Naive thymus-derived CD8-positive, alpha-beta T cell (primary cell): ENCODE measurements at regions of chr21 and their contacts with region 1.

Region 1: GRCh38 chr21:37267269-37268184 is at the start of gene VPS26C:
- DNase-seq: peak; percentile 91 to 99 (median 98)
- ATAC-seq: peak; percentile 86
- H3K4me3 Mint-ChIP-seq: peak within 1 kb of the TSS; percentile 91 to 99 (median 93)
- H3K27ac Mint-ChIP-seq: peak within 1 kb of the TSS; percentile 94 to 99 (median 98)
- H3K4me1 Mint-ChIP-seq: peaks cover 14 to 53% (median 33%) of the 10 kb centered on the region in 4 donors
- H3K27me3 Mint-ChIP-seq: no peaks in the 10 kb centered on the region
- polyA plus RNA-seq, gene VPS26C: 60.1 to 72.7 (median 62.9) TPM

Region 2: GRCh38 chr21:37130971-37131370 is 136.6 kb before region 1 on chr21:
- POLR2A ChIA-PET with region 1: no interaction called
- DNase-seq: no peak
- ATAC-seq: no peak
- H3K4me3 Mint-ChIP-seq: no peak overlapping the region
- H3K27ac Mint-ChIP-seq: no peak overlapping the region
- H3K4me1 Mint-ChIP-seq: peaks cover 5 to 12% (median 8%) of the 10 kb centered on the region in 4 donors
- H3K27me3 Mint-ChIP-seq: no peaks in the 10 kb centered on the region

Region 3: GRCh38 chr21:37220981-37221664 is 46.4 kb before region 1 on chr21:
- POLR2A ChIA-PET with region 1: interaction called, 16 read pairs
- DNase-seq: peak; percentile 86 to 95 (median 90)
- ATAC-seq: peak; percentile 78 to 81
- H3K4me3 Mint-ChIP-seq: peak overlapping the region; percentile 80 to 96 (median 89)
- H3K27ac Mint-ChIP-seq: peak overlapping the region; percentile 81 to 98 (median 95)
- H3K4me1 Mint-ChIP-seq: peaks cover 21 to 61% (median 44%) of the 10 kb centered on the region in 4 donors
- H3K27me3 Mint-ChIP-seq: no peaks in the 10 kb centered on the region

Region 4: GRCh38 chr21:37251294-37251634 is 16.3 kb before region 1 on chr21:
- POLR2A ChIA-PET with region 1: no interaction called
- DNase-seq: no peak
- ATAC-seq: no peak
- H3K4me3 Mint-ChIP-seq: no peak overlapping the region
- H3K27ac Mint-ChIP-seq: no peak overlapping the region
- H3K4me1 Mint-ChIP-seq: peaks cover 23 to 64% (median 55%) of the 10 kb centered on the region in 4 donors
- H3K27me3 Mint-ChIP-seq: no peaks in the 10 kb centered on the region

Region 5: DNA sequence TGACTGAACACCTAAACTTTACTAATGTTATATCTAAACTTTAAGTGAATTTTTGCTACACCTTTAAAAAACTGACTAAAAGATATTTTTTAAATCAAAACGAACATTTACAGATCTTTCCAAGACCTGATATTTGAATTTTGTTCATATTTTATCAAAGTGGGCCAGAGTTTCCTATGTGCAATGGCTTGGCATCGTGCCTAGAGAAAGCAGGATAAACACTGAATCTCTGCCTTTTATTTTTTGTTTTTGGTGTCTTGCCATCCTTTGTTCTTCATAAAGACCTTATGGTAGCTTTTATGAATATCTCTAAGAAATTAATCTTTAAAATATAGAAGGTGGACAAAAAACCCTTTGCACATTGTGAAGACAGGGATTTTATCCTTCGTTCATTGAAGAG is 25.4 kb after region 1 on chr21:
- POLR2A ChIA-PET with region 1: no interaction called
- DNase-seq: no peak
- ATAC-seq: no peak
- H3K4me3 Mint-ChIP-seq: no peak overlapping the region
- H3K27ac Mint-ChIP-seq: no peak overlapping the region
- H3K4me1 Mint-ChIP-seq: peaks cover 0 to 5% (median 0%) of the 10 kb centered on the region in 4 donors
- H3K27me3 Mint-ChIP-seq: no peaks in the 10 kb centered on the region

Region 6: DNA sequence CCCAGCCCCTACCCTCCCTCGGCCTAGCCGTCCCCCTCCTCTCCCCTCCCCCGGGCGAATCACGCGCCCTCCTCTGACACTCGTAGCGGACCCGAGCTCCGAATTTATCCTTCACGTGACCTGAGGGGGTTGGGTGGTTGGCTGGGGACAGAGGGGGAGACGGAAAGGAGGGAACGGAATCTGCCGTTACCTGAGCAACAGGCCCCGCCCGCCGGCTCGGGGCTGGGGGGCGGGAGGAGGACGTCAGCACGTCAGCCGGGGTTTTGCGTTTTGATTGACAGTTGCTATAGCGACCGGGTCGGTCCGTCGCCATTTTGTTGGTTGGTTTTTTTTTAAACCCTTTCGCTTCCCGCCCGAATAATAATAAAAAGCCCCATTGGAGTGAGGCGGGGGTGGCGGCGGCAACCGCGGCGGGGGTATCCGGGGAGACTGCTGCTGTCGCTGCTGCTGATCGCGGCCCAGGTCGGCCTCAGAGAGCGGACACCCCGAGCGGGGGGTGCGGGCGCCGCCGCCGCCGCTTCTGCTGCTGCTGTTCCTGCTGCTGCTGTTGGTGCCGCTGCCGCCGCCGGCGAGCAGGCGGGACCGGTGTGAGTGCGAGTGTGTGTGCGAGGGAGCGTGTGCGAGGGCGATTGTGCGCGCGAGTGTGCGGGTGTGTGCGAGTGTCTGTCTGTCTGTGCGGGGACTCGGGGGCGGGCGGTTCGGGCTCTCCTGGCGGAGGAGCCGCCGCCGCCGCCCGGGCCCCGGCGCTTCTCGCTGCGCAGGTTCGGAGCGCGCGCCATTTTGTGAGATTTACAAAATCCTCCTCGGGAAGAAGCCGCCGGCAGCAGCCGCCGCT is 99.2 kb after region 1 on chr21 and contains the start of gene DYRK1A:
- POLR2A ChIA-PET with region 1: interaction called, 79 read pairs
- DNase-seq: peak; percentile 95 to 99 (median 99)
- ATAC-seq: peak; percentile 77 to 85
- H3K4me3 Mint-ChIP-seq: peak within 1 kb of the TSS; percentile 91 to 100 (median 99)
- H3K27ac Mint-ChIP-seq: peak within 1 kb of the TSS; percentile 98 to 100 (median 99)
- H3K4me1 Mint-ChIP-seq: peaks cover 23 to 52% (median 50%) of the 10 kb centered on the region in 4 donors
- H3K27me3 Mint-ChIP-seq: peaks cover 0 to 2% (median 0%) of the 10 kb centered on the region in 5 donors
- polyA plus RNA-seq, gene DYRK1A: 1.8 to 5.4 (median 2.2) TPM

Region 7: GRCh38 chr21:37563641-37564340 is 296.3 kb after region 1 on chr21:
- POLR2A ChIA-PET with region 1: interaction called, 25 read pairs
- DNase-seq: peak; percentile 85 to 95 (median 88)
- ATAC-seq: peak; percentile 84 to 89
- H3K4me3 Mint-ChIP-seq: peak overlapping the region; percentile 95 to 99 (median 98)
- H3K27ac Mint-ChIP-seq: peak overlapping the region; percentile 97 to 100 (median 99)
- H3K4me1 Mint-ChIP-seq: peaks cover 8 to 25% (median 18%) of the 10 kb centered on the region in 4 donors
- H3K27me3 Mint-ChIP-seq: peaks cover 0 to 1% (median 0%) of the 10 kb centered on the region in 5 donors